Panc1 (cell line): ENCODE measurements at regions of chr6 and their contacts with region 1.

Region 1: GRCh38 chr6:53725791-53726431 is 60.4 kb upstream of the KLHL31 start:
- DNase-seq: peak; percentile 50
- ATAC-seq: peak; percentile 89
- H3K4me3 ChIP-seq: no peak overlapping the region
- H3K27ac ChIP-seq: no peak overlapping the region
- H3K4me1 ChIP-seq: peaks cover 27% of the 10 kb centered on the region
- H3K27me3 ChIP-seq: no peaks in the 10 kb centered on the region
- CTCF ChIP-seq: peak; percentile 99

Region 2: DNA sequence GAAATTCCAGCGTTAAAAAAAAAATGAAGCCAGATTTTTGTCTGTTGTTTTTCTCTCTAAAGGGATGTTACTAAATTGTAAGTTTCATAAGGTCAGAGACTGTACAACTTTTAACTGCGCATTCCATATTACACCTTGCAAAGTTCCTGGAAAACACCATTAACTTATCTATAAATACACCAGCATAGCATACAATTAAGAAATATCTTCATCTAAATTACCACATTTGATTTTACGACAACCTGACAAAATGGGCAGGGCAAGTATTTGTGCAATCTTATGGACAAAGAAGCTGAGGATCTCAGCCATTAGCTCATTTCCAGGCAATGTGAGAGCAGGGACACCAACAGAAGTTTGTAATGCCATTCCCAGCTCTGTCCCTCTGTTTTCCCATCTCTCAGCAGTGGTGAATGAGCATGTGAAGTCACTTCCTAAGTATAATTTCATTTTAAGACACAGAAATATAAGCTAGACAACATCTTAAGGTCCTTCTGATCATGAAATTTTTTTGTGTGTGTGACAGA is 564.4 kb before region 1 on chr6:
- CTCF ChIA-PET with region 1: interaction called, 10 read pairs
- POLR2A ChIA-PET with region 1: no interaction called
- in situ Hi-C with region 1: no loop called
- intact Hi-C with region 1: no loop called
- DNase-seq: no peak
- ATAC-seq: no peak
- H3K4me3 ChIP-seq: no peak overlapping the region
- H3K27ac ChIP-seq: no peak overlapping the region
- H3K4me1 ChIP-seq: no peaks in the 10 kb centered on the region
- H3K27me3 ChIP-seq: no peaks in the 10 kb centered on the region
- CTCF ChIP-seq: no peak

Region 3: DNA sequence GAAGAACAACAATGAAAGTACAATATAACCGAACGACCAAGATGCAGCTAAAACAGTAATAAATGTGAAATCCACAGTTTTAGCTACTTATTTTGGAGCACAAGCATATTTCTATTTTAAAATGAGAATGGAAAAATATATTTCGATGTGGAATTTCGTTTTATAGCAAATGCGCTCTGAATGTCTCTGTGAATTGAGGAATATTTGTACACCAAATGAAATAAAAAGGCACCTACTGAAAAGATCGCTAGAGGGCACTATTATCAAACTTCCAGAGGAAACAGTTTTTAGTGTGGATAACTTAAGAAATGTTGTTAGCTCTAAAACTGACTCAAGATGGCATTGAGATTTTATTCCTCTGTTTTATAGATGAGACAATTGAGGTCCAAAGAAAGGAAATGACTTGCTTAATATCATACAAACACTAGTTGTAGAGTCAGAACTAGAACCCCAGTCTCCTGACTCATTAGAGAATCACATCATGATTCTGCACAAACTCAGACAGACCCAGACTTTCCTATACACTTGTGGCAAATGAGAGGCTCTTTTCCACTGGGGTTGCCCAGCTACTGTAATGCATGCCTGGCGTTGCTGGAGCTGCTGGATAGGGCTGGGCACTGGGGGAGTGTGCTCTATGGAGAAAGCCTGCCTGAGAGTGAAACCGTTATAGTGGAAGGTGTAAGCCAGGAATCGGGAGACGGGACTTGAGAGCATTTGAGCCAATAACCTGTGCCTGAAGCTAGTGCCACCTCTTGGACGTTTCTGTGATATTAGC is 232.9 kb before region 1 on chr6:
- CTCF ChIA-PET with region 1: interaction called, 14 read pairs
- POLR2A ChIA-PET with region 1: no interaction called
- in situ Hi-C with region 1: no loop called
- intact Hi-C with region 1: loop called (anchors 2 kb)
- DNase-seq: peak; percentile 58
- ATAC-seq: peak; percentile 92
- H3K4me3 ChIP-seq: peak overlapping the region; percentile 24 to 44
- H3K27ac ChIP-seq: peak overlapping the region; percentile 44; the same call in 1 of the 2 replicates
- H3K4me1 ChIP-seq: peaks cover 4% of the 10 kb centered on the region; the same call in 1 of the 2 replicates
- H3K27me3 ChIP-seq: no peaks in the 10 kb centered on the region
- CTCF ChIP-seq: peak; percentile 78

Region 4: GRCh38 chr6:53544470-53545308 is 181.2 kb before region 1 on chr6 and contains the start of gene GCLC:
- CTCF ChIA-PET with region 1: no interaction called
- POLR2A ChIA-PET with region 1: no interaction called
- in situ Hi-C with region 1: no loop called
- intact Hi-C with region 1: loop called (anchors 2 kb)
- DNase-seq: peak; percentile 79
- ATAC-seq: peak; percentile 87
- H3K4me3 ChIP-seq: peak within 1 kb of the TSS; percentile 67 to 91
- H3K27ac ChIP-seq: peak within 1 kb of the TSS; percentile 60
- H3K4me1 ChIP-seq: peaks cover 16% of the 10 kb centered on the region
- H3K27me3 ChIP-seq: no peaks in the 10 kb centered on the region
- CTCF ChIP-seq: peak; percentile 94
- total RNA-seq, gene GCLC: 37.2 TPM

Region 5: DNA sequence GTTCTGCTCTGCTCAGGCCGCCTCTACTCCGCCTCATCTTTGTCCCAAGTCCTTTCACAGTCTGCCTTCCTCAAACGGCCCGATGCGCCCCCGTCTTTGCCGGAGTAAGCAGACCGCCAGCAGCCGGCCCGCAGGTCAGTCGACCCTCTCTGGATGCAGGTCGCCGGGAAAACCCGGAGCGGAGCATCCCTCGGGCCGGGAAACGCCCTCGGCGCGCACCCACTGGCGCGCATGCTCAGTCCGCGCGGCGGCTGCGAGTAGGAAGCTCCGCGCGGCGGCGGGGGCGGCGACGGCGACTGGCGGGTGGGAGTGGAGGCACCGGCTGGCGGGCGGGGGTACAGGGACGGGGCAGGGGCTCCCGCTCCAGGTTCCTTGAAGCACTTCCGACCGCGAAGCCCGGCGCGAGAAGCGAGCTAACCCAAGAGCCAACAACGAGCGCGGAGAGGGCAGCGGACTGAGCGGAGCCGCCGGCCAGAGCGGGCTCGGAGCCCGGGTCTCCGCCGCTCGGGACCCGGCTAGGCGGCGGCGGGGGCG is 68.9 kb after region 1 on chr6 and contains the start of gene LRRC1:
- CTCF ChIA-PET with region 1: interaction called, 13 read pairs
- POLR2A ChIA-PET with region 1: no interaction called
- in situ Hi-C with region 1: no loop called
- intact Hi-C with region 1: no loop called
- DNase-seq: peak; percentile 58
- ATAC-seq: peak; percentile 87
- H3K4me3 ChIP-seq: peak within 1 kb of the TSS; percentile 72 to 88
- H3K27ac ChIP-seq: peak within 1 kb of the TSS; percentile 64
- H3K4me1 ChIP-seq: peaks cover 19% of the 10 kb centered on the region
- H3K27me3 ChIP-seq: no peaks in the 10 kb centered on the region
- CTCF ChIP-seq: no peak
- total RNA-seq, gene LRRC1: 13.8 TPM

Region 6: DNA sequence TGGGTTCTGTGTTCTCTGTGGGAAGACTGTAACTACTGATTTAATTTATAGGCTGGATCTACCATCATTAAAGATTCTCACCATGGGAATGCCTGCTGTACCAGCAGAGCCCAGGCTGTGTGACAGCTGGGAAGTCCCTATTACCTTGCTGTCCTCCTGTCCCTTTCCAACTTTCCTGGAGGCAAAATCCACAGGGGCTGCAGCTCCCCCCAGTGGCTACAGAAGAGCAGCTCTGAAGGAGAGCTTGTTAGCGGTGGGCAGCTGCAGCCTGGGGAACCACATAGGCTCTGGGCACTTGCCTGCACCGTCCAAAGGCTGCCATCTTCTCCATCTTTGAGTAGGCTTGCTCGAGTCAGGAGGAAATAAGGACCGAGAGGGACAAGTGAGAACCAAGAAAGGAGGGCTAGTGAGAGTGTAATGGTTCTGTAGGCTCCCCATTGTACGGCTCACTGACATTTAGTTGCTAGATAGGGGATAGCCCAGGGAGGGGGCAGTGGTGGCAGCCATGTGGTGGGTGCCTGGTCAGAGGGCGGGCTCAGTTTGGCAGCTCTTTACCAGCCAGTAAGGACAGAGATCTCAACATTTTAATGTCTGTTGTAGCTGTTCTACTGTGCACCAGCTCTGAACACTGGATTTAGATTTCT is 230.3 kb after region 1 on chr6:
- CTCF ChIA-PET with region 1: interaction called, 14 read pairs
- POLR2A ChIA-PET with region 1: no interaction called
- in situ Hi-C with region 1: no loop called
- intact Hi-C with region 1: loop called (anchors 1 kb)
- DNase-seq: peak; percentile 43
- ATAC-seq: peak; percentile 98
- H3K4me3 ChIP-seq: no peak overlapping the region
- H3K27ac ChIP-seq: no peak overlapping the region
- H3K4me1 ChIP-seq: peaks cover 2% of the 10 kb centered on the region; the same call in 1 of the 2 replicates
- H3K27me3 ChIP-seq: peaks cover 3% of the 10 kb centered on the region; the same call in 1 of the 2 replicates
- CTCF ChIP-seq: peak; percentile 89